Dorsolateral prefrontal cortex (tissue), 120 donors: ENCODE measurements at regions of chr5 and their contacts with region 1.

Region 1: DNA sequence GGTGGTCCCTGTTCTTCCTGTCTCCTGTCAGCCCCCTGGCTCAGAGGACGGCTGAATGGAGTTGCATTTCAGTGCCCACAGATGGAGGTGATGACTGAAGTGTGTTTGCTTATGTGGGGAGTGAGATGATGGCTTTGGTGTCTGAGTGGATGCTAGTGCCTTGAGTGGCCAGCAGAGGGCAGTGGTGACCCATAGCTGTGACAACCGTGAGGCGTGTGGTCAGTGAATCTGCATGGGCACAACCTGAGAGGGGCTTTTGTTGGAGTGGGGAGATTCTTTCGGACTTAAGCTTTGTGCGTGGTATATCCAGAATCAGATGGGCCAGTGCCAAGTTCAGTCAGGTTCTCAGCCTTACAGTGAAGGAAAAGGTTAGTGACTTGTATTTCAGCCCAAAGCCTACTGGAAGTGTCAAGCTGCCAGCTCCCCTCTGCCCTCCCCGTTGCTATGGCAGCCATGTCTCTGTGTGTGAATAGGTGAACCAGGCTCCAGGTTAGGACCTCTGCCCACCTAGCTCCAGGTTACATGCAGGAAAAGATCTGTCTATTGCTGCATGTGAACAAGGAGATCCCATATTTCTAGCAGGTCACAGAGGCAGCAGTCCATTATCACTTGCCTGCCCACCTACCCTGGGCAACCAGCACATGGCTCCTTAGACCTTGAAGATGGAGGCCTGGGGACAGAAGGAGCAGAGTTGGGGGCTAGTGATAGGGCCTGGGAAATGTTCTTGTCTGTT is 14.7 kb upstream of the CXXC5 start:
- DNase-seq: peak in 9 of 10 donors; percentile 69 to 86 (median 77)
- H3K4me3 ChIP-seq: peak overlapping the region in 1 of 59 donors; percentile 3
- H3K27ac ChIP-seq: peak overlapping the region in 25 of 59 donors; percentile 0 to 95 (median 31)
- H3K27me3 ChIP-seq: no peaks in the 10 kb centered on the region
- CTCF ChIP-seq: peak; percentile 76 to 100 (median 98)

Region 2: DNA sequence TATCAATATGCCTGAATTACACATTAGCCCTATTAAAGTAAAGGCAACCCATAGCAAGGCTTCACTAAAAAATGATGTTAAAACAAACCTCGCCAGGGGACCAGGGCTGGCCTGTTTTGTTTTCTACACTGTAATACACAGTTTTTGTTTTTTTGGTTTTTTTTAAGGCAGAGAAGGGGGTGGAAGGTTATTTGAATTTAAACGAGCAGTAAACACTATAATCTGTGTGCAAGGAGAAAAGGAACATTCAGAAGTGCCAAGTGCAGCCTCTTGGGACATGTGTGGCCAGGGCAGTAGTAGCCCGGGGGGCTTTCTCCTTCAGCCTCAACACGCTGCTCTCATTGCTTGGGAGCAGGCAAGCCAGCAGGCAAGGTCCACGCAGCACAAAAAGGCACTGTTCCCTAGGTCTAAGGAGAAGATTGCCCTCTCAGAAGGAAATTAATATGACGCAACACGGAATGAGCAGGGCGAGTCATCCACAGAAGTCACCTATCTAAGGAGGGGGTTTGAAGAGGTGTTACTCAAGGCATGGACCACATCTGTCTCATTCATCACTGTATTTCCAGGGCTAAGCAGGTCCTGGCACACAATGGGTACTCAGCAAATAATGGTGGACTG is 451.5 kb before region 1 on chr5:
- intact Hi-C with region 1: no loop called
- DNase-seq: no peak
- H3K4me3 ChIP-seq: no peak overlapping the region
- H3K27ac ChIP-seq: peak overlapping the region in 13 of 59 donors; percentile 3 to 66 (median 20)
- H3K27me3 ChIP-seq: no peaks in the 10 kb centered on the region
- CTCF ChIP-seq: no peak

Region 3: GRCh38 chr5:139422307-139422893 is 211.1 kb before region 1 on chr5:
- intact Hi-C with region 1: loop called in 1 of 2 experiments (anchors 5 kb)
- DNase-seq: peak in 3 of 10 donors; percentile 11 to 46 (median 38)
- H3K4me3 ChIP-seq: no peak overlapping the region
- H3K27ac ChIP-seq: peak overlapping the region in 37 of 59 donors; percentile 1 to 72 (median 43)
- H3K27me3 ChIP-seq: no peaks in the 10 kb centered on the region
- CTCF ChIP-seq: peak; percentile 53 to 94 (median 81)

Region 4: DNA sequence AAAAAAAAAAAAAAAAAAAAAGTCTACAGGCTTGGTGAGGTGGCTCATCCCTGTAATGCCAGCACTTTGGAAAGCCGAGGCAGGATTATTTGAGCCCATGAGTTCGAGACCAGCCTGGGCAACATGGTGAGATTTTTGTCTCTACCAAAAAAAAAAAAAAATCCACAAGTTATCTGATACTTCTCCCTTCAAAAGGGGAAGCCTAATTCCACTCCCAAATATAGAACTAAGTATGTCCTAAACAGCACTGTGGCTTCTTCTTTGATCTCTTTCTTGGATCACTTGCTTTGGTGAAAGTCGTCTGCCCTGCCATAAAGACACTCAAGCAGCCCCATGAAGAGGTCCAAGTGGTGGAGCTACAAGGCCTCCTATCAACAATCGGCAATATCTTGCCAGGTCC is 132.1 kb before region 1 on chr5:
- intact Hi-C with region 1: no loop called
- DNase-seq: no peak
- H3K4me3 ChIP-seq: no peak overlapping the region
- H3K27ac ChIP-seq: no peak overlapping the region
- H3K27me3 ChIP-seq: no peaks in the 10 kb centered on the region
- CTCF ChIP-seq: no peak

Region 5: DNA sequence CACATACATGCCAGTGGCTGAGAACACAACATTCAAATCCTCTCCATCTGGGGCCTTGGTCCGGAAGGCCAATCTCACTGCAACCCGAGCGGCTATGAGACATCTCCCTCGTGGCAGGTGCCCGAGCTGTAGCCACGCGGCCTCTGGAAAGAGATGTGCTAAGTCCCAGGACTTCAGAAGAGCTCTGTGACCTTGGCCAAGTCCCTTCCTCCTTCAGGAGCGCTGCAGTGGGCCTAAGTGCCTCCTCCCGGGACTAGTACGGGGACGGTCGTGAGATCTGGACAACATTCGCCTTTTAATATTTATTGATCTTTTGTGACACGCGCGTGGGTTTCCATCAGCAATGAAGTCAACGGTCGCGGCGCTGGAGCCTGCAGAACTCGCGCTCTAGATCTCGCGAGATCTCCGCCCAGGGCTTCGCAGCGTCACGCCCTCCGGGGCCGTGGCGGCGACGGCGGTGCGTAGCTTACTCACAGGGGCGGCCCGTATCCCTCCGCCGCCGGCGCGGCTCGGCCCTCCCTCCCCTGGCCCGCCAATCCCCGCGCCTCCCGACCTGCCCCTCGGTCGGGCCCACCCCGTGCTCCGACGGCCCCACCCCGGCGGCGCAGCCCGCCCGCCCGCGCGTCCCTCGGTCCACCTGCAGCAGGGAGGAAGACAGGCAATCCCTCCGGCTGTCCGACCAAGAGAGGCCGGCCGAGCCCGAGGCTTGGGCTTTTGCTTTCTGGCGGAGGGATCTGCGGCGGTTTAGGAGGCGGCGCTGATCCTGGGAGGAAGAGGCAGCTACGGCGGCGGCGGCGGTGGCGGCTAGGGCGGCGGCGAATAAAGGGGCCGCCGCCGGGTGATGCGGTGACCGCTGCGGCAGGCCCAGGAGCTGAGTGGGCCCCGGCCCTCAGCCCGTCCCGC is 72.5 kb before region 1 on chr5 and contains the start of gene UBE2D2:
- intact Hi-C with region 1: loop called (anchors 5 kb)
- DNase-seq: peak; percentile 91 to 97 (median 96)
- H3K4me3 ChIP-seq: peak within 1 kb of the TSS; percentile 66 to 100 (median 93)
- H3K27ac ChIP-seq: peak within 1 kb of the TSS; percentile 77 to 99 (median 97)
- H3K27me3 ChIP-seq: no peaks in the 10 kb centered on the region
- CTCF ChIP-seq: peak in 40 of 56 donors; percentile 2 to 64 (median 30)
- total RNA-seq, gene UBE2D2: 71.6 to 161 (median 119) TPM

Region 6: DNA sequence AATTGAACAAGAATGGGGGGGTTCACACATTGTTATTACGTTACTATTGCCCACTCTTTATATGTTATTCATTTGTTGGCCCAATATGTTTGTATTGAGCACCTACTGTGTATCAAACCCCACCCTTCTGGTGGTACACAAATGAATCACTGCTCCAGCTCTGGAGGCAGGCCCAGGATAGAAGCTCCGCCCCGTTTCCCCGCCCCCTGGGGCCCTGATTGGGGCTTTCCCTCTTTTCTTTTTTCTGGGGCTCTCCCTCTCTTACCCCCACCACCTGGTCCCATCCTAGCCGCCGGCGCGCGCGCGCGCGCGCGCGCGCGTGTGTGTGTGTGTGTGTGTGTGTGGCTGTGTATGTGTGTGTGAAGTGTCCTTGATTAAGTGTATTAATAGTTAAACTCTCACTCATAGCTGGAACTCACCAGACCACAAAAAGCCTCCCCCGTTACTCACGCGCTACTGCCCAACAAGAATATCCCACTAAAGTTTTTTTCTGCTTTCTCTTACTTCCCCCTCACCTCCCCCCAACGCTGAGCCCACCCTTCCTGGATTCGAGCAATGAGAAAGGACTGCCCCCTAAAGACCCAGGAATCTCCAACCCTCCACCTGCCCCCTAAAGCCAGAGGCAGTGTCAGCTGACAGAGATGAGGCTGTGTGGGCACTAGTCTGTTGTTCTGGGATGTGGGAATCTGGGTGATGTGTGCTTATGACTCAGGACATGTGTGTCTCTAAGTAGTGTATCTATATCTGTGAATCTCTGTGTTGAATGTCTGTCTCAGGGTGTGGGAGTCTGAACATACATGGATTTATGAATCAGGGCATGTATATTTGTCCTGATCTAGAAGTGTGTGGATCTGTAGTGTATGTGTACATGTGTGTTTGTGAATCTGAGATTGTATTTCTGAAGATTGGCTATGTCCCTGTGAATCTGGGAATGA is 18.7 kb after region 1 on chr5:
- intact Hi-C with region 1: loop called (anchors 1 to 2 kb)
- DNase-seq: peak; percentile 81 to 97 (median 94)
- H3K4me3 ChIP-seq: peak overlapping the region; percentile 16 to 99 (median 94)
- H3K27ac ChIP-seq: peak overlapping the region; percentile 90 to 100 (median 99)
- H3K27me3 ChIP-seq: no peaks in the 10 kb centered on the region
- CTCF ChIP-seq: peak in 5 of 56 donors; percentile 7 to 32 (median 22)

Region 7: DNA sequence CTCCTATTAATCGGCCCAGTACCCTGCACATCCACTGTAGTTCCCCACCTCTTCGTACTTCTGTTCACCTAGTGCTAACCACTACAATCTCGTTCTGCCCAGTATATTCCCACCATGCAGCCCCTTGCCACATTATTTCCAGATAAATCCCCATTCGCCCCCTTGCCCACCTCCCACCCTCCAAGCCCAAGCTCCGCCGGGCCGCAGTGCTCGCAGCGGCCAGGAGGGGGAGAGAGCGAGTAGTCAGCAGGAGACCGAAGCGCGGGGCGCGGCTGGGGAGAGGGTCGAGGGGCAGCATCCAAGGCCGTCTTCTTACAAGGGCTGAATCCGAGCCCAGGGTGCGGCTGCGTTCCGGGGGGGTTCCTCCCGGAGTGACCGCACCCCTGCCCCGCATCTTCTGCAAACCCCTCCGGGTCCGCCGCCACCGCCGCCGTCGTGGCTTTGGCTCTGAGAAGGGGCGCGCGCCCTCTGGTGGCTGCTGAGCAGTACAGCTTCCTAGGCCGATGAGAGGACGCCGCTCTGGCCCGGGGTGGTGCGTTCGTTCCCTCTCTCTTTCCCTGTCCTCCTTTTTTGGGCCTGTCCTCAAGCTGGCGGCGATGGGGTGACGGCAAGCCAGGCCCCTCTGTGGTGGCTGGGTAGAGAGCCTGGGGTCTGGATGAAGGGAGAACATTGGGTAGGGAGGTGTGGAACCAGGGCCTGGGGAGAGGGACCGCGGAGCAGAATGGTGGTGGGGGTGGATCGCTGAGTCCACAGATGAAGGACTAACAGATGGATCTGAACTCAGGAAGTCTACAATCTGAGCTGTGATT is 132.2 kb after region 1 on chr5:
- intact Hi-C with region 1: loop called (anchors 1 kb)
- DNase-seq: peak in 9 of 10 donors; percentile 68 to 83 (median 78)
- H3K4me3 ChIP-seq: peak overlapping the region; percentile 43 to 84 (median 63)
- H3K27ac ChIP-seq: peak overlapping the region; percentile 66 to 96 (median 92)
- H3K27me3 ChIP-seq: no peaks in the 10 kb centered on the region
- CTCF ChIP-seq: peak; percentile 85 to 100 (median 99)

Region 8: DNA sequence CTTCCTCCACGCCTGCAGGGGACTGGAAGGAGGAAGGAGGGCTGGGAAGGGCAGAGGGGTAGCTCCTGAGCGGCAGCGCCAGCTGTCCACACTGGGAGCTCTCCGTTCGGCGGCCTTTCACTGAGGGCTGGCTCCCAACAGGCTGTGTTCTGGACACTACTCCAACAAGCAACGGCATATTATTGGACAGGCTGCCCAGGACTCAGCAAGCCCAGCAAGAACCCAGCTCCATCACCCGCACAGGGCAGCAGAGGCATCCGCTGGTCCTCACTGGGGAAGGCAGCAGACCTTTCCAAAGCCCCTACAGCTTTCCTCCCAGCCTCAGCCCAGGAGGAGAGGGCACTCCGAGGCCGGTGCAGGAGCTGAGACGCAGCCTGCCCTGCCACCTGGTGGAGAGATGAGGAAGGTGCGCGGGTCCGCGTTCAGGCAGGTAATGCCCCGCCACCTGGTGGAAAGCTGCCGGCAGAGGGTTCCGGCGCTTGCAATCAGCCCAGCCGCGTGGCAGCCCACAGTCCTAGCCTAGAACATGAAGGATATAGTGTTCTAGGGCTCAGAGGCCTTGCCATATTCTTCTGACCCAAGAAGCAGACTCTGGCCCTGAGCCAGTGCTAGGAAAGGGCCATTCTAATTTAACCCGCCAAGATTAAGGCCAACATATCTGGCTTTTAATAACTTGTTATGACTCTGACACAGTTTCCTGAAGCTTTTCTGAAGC is 335.2 kb after region 1 on chr5:
- intact Hi-C with region 1: loop called (anchors 10 kb)
- DNase-seq: peak; percentile 75 to 96 (median 87)
- H3K4me3 ChIP-seq: peak overlapping the region in 19 of 59 donors; percentile 1 to 54 (median 17)
- H3K27ac ChIP-seq: peak overlapping the region in 22 of 59 donors; percentile 0 to 77 (median 46)
- H3K27me3 ChIP-seq: no peaks in the 10 kb centered on the region
- CTCF ChIP-seq: peak; percentile 95 to 100 (median 100)